ENCODE measurements at regions of chr17 and their contacts with region 1.

Region 1: GRCh38 chr17:73681946-73682345 is 37.7 kb upstream of the SDK2 start:
- DNase-seq: no peak
- H3K4me3 Mint-ChIP-seq: no peak overlapping the region
- H3K27ac Mint-ChIP-seq: no peak overlapping the region
- H3K4me1 Mint-ChIP-seq: no peaks in the 10 kb centered on the region
- H3K27me3 Mint-ChIP-seq: peaks cover 2% of the 10 kb centered on the region

Region 2: DNA sequence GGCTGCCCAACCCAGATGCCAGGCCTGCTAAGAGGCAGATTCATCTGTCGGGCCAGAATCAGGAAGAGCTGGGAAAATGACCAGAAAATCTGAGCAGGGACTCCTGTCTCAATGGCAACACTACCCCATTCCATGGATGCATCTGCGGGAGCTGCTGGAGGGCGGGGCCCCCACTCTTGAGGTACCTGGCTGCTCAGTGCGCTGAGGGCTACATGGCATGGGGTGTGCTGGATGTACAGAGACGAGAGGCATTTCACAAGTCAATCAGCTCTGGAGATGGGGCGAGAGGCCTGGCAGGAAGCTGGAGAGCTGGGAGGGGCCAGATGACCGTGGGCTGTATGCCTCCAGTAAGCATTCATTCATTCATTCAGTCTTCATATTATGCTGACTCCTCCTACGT is 44.1 kb before region 1 on chr17:
- intact Hi-C with region 1: loop called (anchors 1 kb)
- DNase-seq: no peak
- H3K4me3 Mint-ChIP-seq: no peak overlapping the region
- H3K27ac Mint-ChIP-seq: no peak overlapping the region
- H3K4me1 Mint-ChIP-seq: peaks cover 9% of the 10 kb centered on the region
- H3K27me3 Mint-ChIP-seq: peaks cover 25% of the 10 kb centered on the region

Measured in activated T-helper 1 cell treated with anti-CD3 and anti-CD28 coated beads, Interleukin-12 subunit alpha, Interleukin-12 subunit beta, Interleukin-2, Interleukin-4 antibody, amounts not matched to agents 30 ng/mL and 10 ng/mL and 1 ng/mL, durations not matched to agents 14 hours and 24 hours and 36 hours (primary cell).